Activated CD8-positive, alpha-beta T cell treated with anti-CD3 and anti-CD28 coated beads for 36 hours (primary cell): ENCODE measurements at regions of chr22 and their contacts with region 1.

Region 1: DNA sequence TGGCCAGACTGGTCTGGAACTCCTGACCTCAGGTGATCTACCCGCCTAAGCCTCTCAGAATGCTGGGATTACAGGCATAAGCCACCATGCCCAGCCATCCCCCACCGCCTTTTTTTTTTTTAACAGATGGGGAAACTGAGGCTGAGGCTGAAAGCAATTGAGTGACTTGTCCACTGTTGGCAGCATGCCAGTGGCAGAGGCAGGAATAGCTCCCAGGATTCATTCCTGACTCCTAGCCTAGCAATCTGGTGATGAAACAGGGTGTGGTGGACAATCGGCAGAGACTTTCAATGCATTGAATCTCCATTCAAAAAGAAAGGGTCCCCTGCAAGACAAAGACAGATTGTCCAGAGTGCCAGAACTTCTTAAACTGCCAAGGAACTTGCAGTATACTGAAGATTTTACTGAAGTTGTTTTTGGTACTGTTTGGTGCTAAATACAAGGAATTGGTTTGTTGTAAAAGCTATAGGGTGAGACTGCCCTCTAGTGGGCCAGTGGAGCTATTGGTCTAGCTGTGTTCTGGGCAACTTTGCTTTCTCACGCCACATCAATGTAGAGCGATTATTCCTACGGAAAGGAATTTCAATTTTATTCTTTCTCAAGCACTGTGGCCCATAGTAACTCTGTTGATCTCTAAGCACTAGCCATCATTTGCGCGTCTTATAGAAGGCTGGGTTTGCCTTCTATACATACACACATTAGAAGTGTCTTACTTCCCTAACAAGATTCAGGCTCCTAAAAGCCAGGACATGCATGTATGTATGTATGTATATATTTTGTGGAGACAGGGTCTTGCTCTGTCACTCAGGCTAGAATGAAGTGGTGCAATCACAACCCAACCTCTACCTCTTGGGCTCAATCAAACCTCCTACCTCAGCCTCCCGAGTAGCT is 21.0 kb downstream of the C22orf31 start:
- DNase-seq: peak; percentile 77
- ATAC-seq: peak; percentile 75
- H3K4me3 Mint-ChIP-seq: no peak overlapping the region
- H3K27ac Mint-ChIP-seq: no peak overlapping the region
- H3K4me1 Mint-ChIP-seq: no peaks in the 10 kb centered on the region
- H3K27me3 Mint-ChIP-seq: peaks cover 2% of the 10 kb centered on the region
- CTCF ChIP-seq: peak; percentile 96

Region 2: GRCh38 chr22:28600546-28601143 is 440.0 kb before region 1 on chr22:
- CTCF ChIA-PET with region 1: interaction called, 35 read pairs
- POLR2A ChIA-PET with region 1: no interaction called
- intact Hi-C with region 1: no loop called
- DNase-seq: no peak
- ATAC-seq: no peak
- H3K4me3 Mint-ChIP-seq: no peak overlapping the region
- H3K27ac Mint-ChIP-seq: no peak overlapping the region
- H3K4me1 Mint-ChIP-seq: no peaks in the 10 kb centered on the region
- H3K27me3 Mint-ChIP-seq: peaks cover 18% of the 10 kb centered on the region
- CTCF ChIP-seq: peak; percentile 80

Region 3: DNA sequence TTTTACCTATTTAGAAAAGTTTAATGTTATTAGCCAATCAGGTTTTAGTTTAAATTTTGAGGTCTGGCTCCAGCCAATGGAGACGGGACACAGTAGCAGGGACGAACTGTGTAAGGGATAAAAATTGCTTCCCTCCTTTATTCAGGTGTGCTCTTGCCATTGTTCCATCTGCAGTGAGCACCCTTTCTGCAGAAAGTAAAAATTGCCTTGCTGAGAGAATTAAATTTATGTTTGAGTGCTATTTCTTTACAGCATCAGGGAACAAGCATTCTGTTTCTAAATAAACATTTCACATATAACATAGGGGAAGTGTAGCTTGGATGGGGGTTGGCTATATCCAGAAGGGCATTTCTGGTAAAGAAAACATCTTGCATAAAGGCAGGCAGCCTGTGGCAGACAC is 193.6 kb before region 1 on chr22:
- CTCF ChIA-PET with region 1: interaction called, 19 read pairs
- POLR2A ChIA-PET with region 1: no interaction called
- intact Hi-C with region 1: no loop called
- DNase-seq: no peak
- ATAC-seq: no peak
- H3K4me3 Mint-ChIP-seq: no peak overlapping the region
- H3K27ac Mint-ChIP-seq: no peak overlapping the region
- H3K4me1 Mint-ChIP-seq: no peaks in the 10 kb centered on the region
- H3K27me3 Mint-ChIP-seq: no peaks in the 10 kb centered on the region
- CTCF ChIP-seq: no peak

Region 4: DNA sequence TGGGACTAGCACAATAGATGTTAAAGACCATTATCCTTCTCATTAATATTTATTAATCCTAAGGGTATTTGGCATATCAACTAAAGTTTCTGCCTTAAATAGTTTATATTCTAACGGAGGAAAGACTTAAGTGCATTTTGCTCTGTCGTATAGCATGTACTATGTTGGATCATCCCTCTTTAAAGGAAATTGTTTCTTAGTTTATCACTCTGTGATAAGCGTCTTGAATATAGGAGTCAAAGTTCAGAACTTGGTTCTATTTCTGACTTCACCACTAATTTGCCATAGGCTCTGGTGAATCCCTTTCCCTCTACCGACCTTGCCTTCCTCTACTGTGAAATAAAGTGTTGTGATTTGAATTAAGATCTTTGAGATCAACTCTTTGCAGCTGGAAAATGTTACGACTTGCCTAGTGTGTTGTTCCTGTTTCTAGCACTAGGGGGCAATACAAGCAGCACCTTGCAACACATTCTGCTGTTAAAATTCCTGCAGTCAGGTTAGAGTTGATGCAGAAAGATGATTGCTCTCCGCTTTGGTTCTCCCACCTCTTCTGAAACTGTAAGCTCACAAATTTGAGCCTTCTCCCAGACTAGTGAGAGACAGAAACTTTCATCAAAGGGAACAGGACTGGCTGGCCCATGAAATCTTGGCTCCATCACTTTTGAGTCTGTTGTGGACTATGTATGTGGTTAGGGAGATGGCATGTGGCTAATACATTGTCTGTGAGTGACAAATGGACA is 185.1 kb before region 1 on chr22:
- CTCF ChIA-PET with region 1: interaction called, 109 read pairs
- POLR2A ChIA-PET with region 1: no interaction called
- intact Hi-C with region 1: loop called (anchors 1 kb)
- DNase-seq: peak; percentile 52
- ATAC-seq: peak; percentile 62
- H3K4me3 Mint-ChIP-seq: no peak overlapping the region
- H3K27ac Mint-ChIP-seq: no peak overlapping the region
- H3K4me1 Mint-ChIP-seq: no peaks in the 10 kb centered on the region
- H3K27me3 Mint-ChIP-seq: peaks cover 4% of the 10 kb centered on the region
- CTCF ChIP-seq: peak; percentile 95

Region 5: GRCh38 chr22:28864878-28865596 is 175.6 kb before region 1 on chr22:
- CTCF ChIA-PET with region 1: interaction called, 15 read pairs
- POLR2A ChIA-PET with region 1: no interaction called
- intact Hi-C with region 1: no loop called
- DNase-seq: no peak
- ATAC-seq: no peak
- H3K4me3 Mint-ChIP-seq: no peak overlapping the region
- H3K27ac Mint-ChIP-seq: no peak overlapping the region
- H3K4me1 Mint-ChIP-seq: no peaks in the 10 kb centered on the region
- H3K27me3 Mint-ChIP-seq: no peaks in the 10 kb centered on the region
- CTCF ChIP-seq: no peak

Region 6: GRCh38 chr22:29016067-29016938 is 24.3 kb before region 1 on chr22:
- CTCF ChIA-PET with region 1: interaction called, 12 read pairs
- POLR2A ChIA-PET with region 1: no interaction called
- intact Hi-C with region 1: no loop called
- DNase-seq: peak; percentile 67
- ATAC-seq: peak; percentile 85
- H3K4me3 Mint-ChIP-seq: no peak overlapping the region
- H3K27ac Mint-ChIP-seq: peak overlapping the region; percentile 55
- H3K4me1 Mint-ChIP-seq: peaks cover 10% of the 10 kb centered on the region
- H3K27me3 Mint-ChIP-seq: peaks cover 19% of the 10 kb centered on the region
- CTCF ChIP-seq: no peak

Region 7: GRCh38 chr22:29208879-29209623 is 168.4 kb after region 1 on chr22:
- CTCF ChIA-PET with region 1: no interaction called
- POLR2A ChIA-PET with region 1: no interaction called
- intact Hi-C with region 1: no loop called
- DNase-seq: no peak
- ATAC-seq: no peak
- H3K4me3 Mint-ChIP-seq: no peak overlapping the region
- H3K27ac Mint-ChIP-seq: no peak overlapping the region
- H3K4me1 Mint-ChIP-seq: peaks cover 6% of the 10 kb centered on the region
- H3K27me3 Mint-ChIP-seq: peaks cover 30% of the 10 kb centered on the region
- CTCF ChIP-seq: no peak